ENCODE measurements at regions of chr19 and their contacts with region 1.

Region 1: DNA sequence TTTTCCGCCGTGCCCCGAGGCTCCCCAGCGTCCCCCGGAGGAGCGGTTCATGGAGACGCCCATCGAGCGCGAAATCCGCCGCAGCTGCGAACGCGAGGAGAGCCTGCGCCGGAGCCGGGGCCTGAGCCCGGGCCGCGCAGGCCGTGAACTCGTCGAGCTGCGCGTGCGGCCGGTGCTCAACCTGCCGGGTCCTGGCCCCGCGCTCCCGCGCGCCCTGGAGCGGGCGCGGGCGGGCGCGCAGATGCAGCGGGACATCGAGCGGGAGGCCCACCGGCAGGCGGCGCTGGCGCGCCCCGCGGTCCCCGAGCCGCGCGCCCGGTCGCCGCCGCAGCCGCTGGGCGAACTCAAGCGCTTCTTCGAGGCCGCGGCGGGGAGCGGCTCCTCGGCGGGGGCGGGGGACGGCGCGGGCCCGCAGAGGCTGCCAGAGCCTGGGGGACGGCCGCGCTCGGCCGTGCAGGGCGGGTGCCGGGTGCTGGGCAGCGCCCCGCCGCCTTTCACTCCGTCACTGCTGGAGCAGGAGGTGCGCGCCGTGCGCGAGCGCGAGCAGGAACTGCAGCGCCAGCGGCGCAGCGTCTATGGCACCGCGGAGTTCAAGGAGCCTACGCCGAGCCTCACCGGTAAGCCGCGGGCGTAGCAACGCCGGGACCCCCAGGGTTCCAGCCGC is 807 bp downstream of the MISP3 start:
- DNase-seq: peak; percentile 54 to 96 (median 71)

Region 2: DNA sequence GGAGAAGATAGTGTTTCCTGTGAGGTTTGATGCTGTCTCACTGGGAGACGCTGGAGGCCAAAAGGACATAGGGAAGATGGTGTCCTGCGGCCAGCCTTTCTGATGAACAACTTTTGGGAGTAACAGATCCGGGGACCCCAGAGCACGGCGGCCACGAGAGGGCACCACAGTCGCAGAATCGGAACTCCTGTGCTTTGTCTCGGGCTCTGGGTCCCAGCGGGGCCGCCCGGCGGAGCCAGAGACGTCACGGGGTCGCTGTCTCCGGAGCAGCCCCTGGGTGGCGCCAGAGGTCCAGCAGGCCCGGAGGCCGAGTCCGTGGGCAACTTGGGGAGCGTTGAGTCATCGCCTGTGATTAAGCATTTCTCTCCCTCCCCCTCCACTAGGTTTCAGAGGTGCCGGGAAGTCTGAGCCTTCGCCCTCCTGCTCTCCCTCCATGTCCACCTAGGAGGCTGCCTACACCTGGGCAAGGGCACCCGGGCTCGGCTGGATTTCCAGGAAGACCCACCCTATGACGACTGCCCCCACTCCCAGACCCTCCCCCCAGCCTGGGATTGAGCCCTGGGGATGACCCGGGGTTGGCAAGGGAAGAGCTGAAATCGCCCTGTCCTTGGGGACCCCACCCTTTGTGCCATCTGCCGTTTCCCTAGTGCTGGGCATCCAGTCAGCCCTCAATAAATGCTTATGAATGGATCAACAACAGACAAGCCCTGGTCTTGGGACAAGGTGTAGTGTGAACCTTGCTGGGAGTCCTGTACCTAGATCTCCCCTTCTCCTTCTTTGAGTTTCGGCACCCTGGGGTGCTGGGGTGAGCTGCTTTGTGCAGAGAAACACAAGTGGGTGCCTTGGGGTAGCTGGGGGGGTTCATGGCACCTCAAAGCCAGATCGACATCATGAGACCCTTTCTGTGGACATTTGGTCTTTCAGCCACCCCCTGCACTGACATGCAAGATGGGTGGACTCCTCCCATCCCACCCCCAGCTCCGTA is 193.0 kb before region 1 on chr19:
- intact Hi-C with region 1: loop called (anchors 1 kb)
- DNase-seq: peak; percentile 92 to 100 (median 97)

Region 3: DNA sequence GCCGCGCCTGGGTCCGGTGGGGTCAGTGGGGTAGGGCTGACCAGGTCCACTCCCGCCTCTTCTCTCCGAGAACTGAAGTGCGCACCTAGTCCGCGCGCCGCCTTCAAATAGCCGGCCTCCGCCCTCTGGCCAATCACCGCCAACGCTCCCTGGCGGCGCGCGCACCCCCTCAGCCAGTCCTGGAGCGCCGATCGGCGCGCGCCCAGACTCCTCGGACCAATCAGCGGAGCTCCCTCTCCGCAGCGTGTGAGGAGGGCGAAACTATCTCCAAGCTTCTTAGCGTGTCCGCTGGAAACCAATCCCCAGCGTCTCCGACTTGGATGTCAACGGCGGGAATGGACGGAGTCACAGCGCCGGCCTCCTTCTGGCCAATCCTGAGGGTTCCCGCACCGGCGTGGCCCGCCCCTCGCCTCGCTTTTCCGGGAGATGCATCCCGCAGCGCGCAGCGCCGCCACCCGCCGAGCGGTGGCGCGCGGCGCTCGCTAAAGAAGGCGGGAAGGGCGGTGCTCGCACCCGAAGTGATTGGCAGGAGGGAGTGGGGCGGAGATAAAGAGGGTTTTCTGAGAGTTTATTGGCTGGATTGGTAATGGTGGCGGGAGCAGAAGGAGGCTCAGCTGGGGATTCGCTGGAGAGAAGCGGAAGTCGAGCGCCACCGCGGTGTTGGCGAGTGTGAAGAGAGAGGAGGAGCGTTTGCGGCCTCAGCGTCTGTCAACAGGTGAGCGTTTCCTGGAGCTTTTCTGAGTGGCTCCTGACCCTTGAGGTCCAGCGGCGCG is 63.3 kb after region 1 on chr19 and contains the start of gene ASF1B:
- intact Hi-C with region 1: loop called (anchors 2 kb)
- DNase-seq: peak; percentile 96 to 100 (median 99)